ENCODE measurements at regions of chr5 and their contacts with region 1.

Region 1: GRCh38 chr5:150224483-150225027 is 34.7 kb downstream of the SLC6A7 start:
- DNase-seq: no peak
- ATAC-seq: no peak
- H3K4me3 ChIP-seq: no peak overlapping the region
- H3K27ac ChIP-seq: no peak overlapping the region
- H3K4me1 ChIP-seq: no peaks in the 10 kb centered on the region
- H3K27me3 ChIP-seq: no peaks in the 10 kb centered on the region
- CTCF ChIP-seq: no peak
- POLR2A ChIP-seq: no peak

Region 2: GRCh38 chr5:150161242-150162141 is 63.1 kb before region 1 on chr5:
- in situ Hi-C with region 1: loop called in 3 of 4 experiments (anchors 5 kb)
- intact Hi-C with region 1: no loop called
- DNase-seq: peak; percentile 58 to 82
- ATAC-seq: peak; percentile 60 to 83
- H3K4me3 ChIP-seq: no peak overlapping the region
- H3K27ac ChIP-seq: peak overlapping the region; percentile 76 to 84 (median 82)
- H3K4me1 ChIP-seq: peaks cover 20 to 25% of the 10 kb centered on the region in 2 donors
- H3K27me3 ChIP-seq: no peaks in the 10 kb centered on the region
- CTCF ChIP-seq: peak; percentile 95 to 98 (median 97)
- POLR2A ChIP-seq: no peak